ENCODE measurements at regions of chr1 and their contacts with region 1.

Region 1: DNA sequence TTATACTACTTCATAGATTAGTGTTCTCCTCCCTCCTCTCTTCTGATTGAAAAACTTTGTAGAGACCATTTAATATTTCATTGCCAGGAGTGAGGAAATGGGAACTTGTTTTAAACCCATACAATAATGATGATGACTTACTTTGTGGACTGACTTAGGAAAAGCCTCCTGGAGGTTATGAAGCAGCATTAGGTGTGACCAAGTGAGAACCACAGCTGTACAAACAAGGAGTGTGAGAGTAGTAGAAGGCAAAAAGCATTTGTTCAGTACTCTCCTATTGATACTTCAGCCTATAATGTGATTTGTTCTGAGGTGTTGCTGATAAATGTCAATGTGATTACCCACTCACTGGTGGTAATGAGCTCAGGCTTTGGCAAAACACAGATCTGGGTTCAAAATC is 8.4 kb downstream of the TIPRL start:
- DNase-seq: no peak
- H3K4me3 ChIP-seq: no peak overlapping the region
- H3K4me3 Mint-ChIP-seq: no peak overlapping the region
- H3K27ac ChIP-seq: no peak overlapping the region
- H3K27ac Mint-ChIP-seq: no peak overlapping the region
- H3K4me1 ChIP-seq: no peaks in the 10 kb centered on the region
- H3K4me1 Mint-ChIP-seq: no peaks in the 10 kb centered on the region
- H3K27me3 ChIP-seq: no peaks in the 10 kb centered on the region
- H3K27me3 Mint-ChIP-seq: peaks cover 0 to 2% (median 0%) of the 10 kb centered on the region in 3 donors
- CTCF ChIP-seq: no peak

Region 2: GRCh38 chr1:168163670-168164069 is 23.5 kb before region 1 on chr1:
- intact Hi-C with region 1: loop called in 1 of 2 experiments (anchors 2 kb)
- DNase-seq: peak in 1 of 3 donors; percentile 27
- H3K4me3 ChIP-seq: no peak overlapping the region
- H3K4me3 Mint-ChIP-seq: no peak overlapping the region
- H3K27ac ChIP-seq: no peak overlapping the region
- H3K27ac Mint-ChIP-seq: peak overlapping the region in 1 of 7 donors; percentile 29
- H3K4me1 ChIP-seq: peaks cover 16 to 17% of the 10 kb centered on the region in 2 donors
- H3K4me1 Mint-ChIP-seq: peaks cover 21% of the 10 kb centered on the region
- H3K27me3 ChIP-seq: no peaks in the 10 kb centered on the region
- H3K27me3 Mint-ChIP-seq: peaks cover 0 to 4% (median 4%) of the 10 kb centered on the region in 3 donors
- CTCF ChIP-seq: no peak

Region 3: GRCh38 chr1:168234846-168235547 is 47.8 kb after region 1 on chr1:
- intact Hi-C with region 1: no loop called
- DNase-seq: peak in 1 of 3 donors; percentile 22
- H3K4me3 ChIP-seq: no peak overlapping the region
- H3K4me3 Mint-ChIP-seq: no peak overlapping the region
- H3K27ac ChIP-seq: peak overlapping the region in 1 of 2 donors; percentile 2
- H3K27ac Mint-ChIP-seq: peak overlapping the region in 1 of 7 donors; percentile 51
- H3K4me1 ChIP-seq: no peaks in the 10 kb centered on the region
- H3K4me1 Mint-ChIP-seq: peaks cover 8% of the 10 kb centered on the region
- H3K27me3 ChIP-seq: no peaks in the 10 kb centered on the region
- H3K27me3 Mint-ChIP-seq: no peaks in the 10 kb centered on the region
- CTCF ChIP-seq: peak; percentile 65

Measured in CD14-positive monocyte (primary cell).